ENCODE measurements at regions of chr13 and their contacts with region 1.

Region 1: GRCh38 chr13:79775830-79776229 is 294.9 kb downstream of the NDFIP2 start:
- DNase-seq: peak; percentile 81 to 85
- H3K4me3 ChIP-seq: no peak overlapping the region
- H3K4me3 Mint-ChIP-seq: no peak overlapping the region
- H3K27ac Mint-ChIP-seq: peak overlapping the region; percentile 69
- H3K4me1 ChIP-seq: peaks cover 63% of the 10 kb centered on the region
- H3K4me1 Mint-ChIP-seq: peaks cover 56% of the 10 kb centered on the region
- H3K27me3 ChIP-seq: no peaks in the 10 kb centered on the region
- H3K27me3 Mint-ChIP-seq: no peaks in the 10 kb centered on the region
- CTCF ChIP-seq: peak; percentile 78 to 87

Region 2: GRCh38 chr13:79973533-79973963 is 197.7 kb after region 1 on chr13:
- CTCF ChIA-PET with region 1: no interaction called
- POLR2A ChIA-PET with region 1: no interaction called
- intact Hi-C with region 1: loop called (anchors 1 kb)
- DNase-seq: peak in 1 of 2 experiments; percentile 45
- H3K4me3 ChIP-seq: no peak overlapping the region
- H3K4me3 Mint-ChIP-seq: no peak overlapping the region
- H3K27ac Mint-ChIP-seq: no peak overlapping the region
- H3K4me1 ChIP-seq: peaks cover 4% of the 10 kb centered on the region
- H3K4me1 Mint-ChIP-seq: peaks cover 5% of the 10 kb centered on the region
- H3K27me3 ChIP-seq: no peaks in the 10 kb centered on the region
- H3K27me3 Mint-ChIP-seq: no peaks in the 10 kb centered on the region
- CTCF ChIP-seq: peak; percentile 45 to 75

Region 3: GRCh38 chr13:80058626-80059025 is 282.8 kb after region 1 on chr13:
- CTCF ChIA-PET with region 1: interaction called, 3 read pairs
- POLR2A ChIA-PET with region 1: no interaction called
- intact Hi-C with region 1: loop called (anchors 1 kb)
- DNase-seq: no peak
- H3K4me3 ChIP-seq: no peak overlapping the region
- H3K4me3 Mint-ChIP-seq: no peak overlapping the region
- H3K27ac Mint-ChIP-seq: no peak overlapping the region
- H3K4me1 ChIP-seq: no peaks in the 10 kb centered on the region
- H3K4me1 Mint-ChIP-seq: no peaks in the 10 kb centered on the region
- H3K27me3 ChIP-seq: no peaks in the 10 kb centered on the region
- H3K27me3 Mint-ChIP-seq: no peaks in the 10 kb centered on the region
- CTCF ChIP-seq: no peak

Region 4: DNA sequence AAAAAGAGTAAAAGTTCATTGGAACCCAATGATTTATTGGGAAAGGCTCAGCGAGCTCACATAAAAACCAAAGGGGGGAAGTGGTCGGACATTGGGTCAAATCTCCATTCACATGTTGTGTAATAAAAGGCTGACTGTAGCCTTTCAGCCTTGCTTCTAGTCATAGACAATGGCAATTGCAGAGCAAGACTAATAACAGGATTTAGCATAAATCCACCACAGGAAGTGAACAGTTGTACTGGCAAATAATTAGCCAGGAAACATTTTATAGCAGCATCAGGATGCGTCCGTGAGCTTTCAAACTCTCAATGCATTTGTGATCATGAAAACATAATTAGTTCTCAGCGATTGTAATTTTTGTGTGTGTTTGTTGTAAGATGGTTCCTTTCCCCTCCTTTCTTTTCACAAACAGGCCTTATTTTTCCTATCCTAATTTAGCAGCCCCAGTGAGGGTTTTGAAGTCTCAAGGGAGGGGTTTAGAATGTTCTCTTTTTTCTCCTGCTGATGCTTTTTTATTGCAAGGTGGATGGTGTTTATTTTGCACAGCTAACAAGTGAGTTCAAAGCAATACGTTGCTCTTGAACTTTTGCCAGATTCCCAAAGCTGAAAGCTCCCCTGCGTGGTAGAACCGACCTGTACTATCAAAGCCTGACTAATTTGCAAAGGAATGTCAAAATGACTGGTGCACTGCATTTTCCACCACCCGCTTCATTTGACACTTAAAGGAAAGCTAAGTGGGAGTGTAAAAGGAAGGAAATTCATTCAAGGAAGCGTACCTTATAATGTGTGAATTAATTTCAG is 459.5 kb after region 1 on chr13:
- CTCF ChIA-PET with region 1: no interaction called
- POLR2A ChIA-PET with region 1: no interaction called
- intact Hi-C with region 1: loop called (anchors 1 kb)
- DNase-seq: no peak
- H3K4me3 ChIP-seq: no peak overlapping the region
- H3K4me3 Mint-ChIP-seq: peak overlapping the region; percentile 8
- H3K27ac Mint-ChIP-seq: no peak overlapping the region
- H3K4me1 ChIP-seq: peaks cover 19% of the 10 kb centered on the region
- H3K4me1 Mint-ChIP-seq: peaks cover 18% of the 10 kb centered on the region
- H3K27me3 ChIP-seq: no peaks in the 10 kb centered on the region
- H3K27me3 Mint-ChIP-seq: no peaks in the 10 kb centered on the region
- CTCF ChIP-seq: no peak

Region 5: GRCh38 chr13:81017513-81018152 is 1241.8 kb after region 1 on chr13:
- CTCF ChIA-PET with region 1: no interaction called
- POLR2A ChIA-PET with region 1: no interaction called
- intact Hi-C with region 1: loop called (anchors 5 kb)
- DNase-seq: peak in 1 of 2 experiments; percentile 30
- H3K4me3 ChIP-seq: no peak overlapping the region
- H3K4me3 Mint-ChIP-seq: no peak overlapping the region
- H3K27ac Mint-ChIP-seq: no peak overlapping the region
- H3K4me1 ChIP-seq: no peaks in the 10 kb centered on the region
- H3K4me1 Mint-ChIP-seq: no peaks in the 10 kb centered on the region
- H3K27me3 ChIP-seq: no peaks in the 10 kb centered on the region
- H3K27me3 Mint-ChIP-seq: no peaks in the 10 kb centered on the region
- CTCF ChIP-seq: peak; percentile 44 to 57

Measured in Caco-2 (cell line).